HepG2 (cell line): ENCODE measurements at regions of chr16 and their contacts with region 1.

Region 1: DNA sequence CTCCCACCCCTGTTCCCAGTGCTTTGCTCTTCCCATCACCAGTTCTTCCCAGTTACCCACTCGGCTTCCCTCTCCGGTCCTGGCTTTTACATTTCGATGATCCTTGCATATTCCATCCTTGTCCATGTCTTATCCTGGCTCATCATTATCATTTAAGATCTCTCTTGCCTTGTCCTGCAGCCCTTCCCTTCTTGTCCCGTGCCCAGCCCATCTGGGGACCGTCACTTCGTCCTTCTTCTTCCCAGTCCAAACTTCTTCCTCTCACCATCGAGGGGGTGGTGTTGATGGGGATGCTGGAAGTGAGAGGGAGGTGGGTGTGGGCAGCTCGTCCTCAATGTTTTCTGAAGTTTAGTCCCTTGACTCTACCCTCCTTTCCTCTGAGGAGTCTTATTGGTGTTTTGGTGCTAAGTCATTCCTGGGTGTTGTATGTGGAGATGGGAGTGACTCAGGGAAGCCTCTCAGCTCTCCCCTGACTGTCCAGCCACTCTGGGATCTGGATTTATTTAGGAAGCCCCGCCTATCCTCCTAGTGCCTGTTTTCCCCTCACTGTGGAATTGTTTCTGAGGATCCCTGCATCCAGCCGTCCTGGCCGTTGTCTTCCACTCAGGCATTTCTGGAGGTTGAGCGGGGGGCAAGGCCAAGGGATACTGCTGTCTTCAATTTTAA is 975 bp downstream of the SNX29 start:
- DNase-seq: no peak
- ATAC-seq: peak; percentile 4
- H3K4me3 ChIP-seq: peak overlapping the region; percentile 75 to 91 (median 87)
- H3K27ac ChIP-seq: no peak overlapping the region
- H3K4me1 ChIP-seq: peaks cover 43% of the 10 kb centered on the region
- H3K27me3 ChIP-seq: no peaks in the 10 kb centered on the region; a peak in 1 of 5 replicates
- CTCF ChIP-seq: no peak
- EP300 ChIP-seq: no peak
- POLR2A ChIP-seq: no peak
- RAD21 ChIP-seq: no peak

Region 2: DNA sequence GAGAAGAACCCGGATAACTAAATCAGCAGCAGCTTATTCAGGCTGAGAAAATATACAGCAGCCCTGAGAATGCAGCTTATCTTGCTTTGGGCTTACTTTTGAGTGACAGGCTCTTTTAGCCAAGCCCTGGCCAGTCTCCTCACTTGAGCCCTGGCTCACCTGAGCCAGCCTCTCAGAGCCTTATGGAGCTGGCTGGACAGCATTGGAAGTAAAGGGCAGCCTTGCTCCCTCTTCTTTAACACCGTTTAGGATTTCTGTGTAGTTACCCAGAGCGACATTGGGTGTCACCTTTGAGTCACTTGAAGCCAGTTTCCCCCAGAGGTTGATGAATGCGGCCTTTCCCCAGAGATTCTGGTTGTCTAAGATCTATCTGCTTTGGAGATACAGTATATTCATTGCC is 28.0 kb before region 1 on chr16:
- CTCF ChIA-PET with region 1: no interaction called
- POLR2A ChIA-PET with region 1: interaction called, 10 read pairs
- in situ Hi-C with region 1: no loop called
- intact Hi-C with region 1: no loop called
- DNase-seq: peak; percentile 73
- ATAC-seq: peak; percentile 97
- H3K4me3 ChIP-seq: no peak overlapping the region
- H3K27ac ChIP-seq: no peak overlapping the region
- H3K4me1 ChIP-seq: peaks cover 25% of the 10 kb centered on the region; the same call in 1 of the 2 replicates
- H3K27me3 ChIP-seq: peaks cover 0 to 12% of the 10 kb centered on the region in 2 experiments; a peak in 2 of 5 replicates
- CTCF ChIP-seq: peak; percentile 93
- EP300 ChIP-seq: 0 out of 4 replicates have a peak, but pooled peaks of 1 of the 2 experiments have one; percentile 19
- POLR2A ChIP-seq: no peak
- RAD21 ChIP-seq: peak; percentile 77

Region 3: DNA sequence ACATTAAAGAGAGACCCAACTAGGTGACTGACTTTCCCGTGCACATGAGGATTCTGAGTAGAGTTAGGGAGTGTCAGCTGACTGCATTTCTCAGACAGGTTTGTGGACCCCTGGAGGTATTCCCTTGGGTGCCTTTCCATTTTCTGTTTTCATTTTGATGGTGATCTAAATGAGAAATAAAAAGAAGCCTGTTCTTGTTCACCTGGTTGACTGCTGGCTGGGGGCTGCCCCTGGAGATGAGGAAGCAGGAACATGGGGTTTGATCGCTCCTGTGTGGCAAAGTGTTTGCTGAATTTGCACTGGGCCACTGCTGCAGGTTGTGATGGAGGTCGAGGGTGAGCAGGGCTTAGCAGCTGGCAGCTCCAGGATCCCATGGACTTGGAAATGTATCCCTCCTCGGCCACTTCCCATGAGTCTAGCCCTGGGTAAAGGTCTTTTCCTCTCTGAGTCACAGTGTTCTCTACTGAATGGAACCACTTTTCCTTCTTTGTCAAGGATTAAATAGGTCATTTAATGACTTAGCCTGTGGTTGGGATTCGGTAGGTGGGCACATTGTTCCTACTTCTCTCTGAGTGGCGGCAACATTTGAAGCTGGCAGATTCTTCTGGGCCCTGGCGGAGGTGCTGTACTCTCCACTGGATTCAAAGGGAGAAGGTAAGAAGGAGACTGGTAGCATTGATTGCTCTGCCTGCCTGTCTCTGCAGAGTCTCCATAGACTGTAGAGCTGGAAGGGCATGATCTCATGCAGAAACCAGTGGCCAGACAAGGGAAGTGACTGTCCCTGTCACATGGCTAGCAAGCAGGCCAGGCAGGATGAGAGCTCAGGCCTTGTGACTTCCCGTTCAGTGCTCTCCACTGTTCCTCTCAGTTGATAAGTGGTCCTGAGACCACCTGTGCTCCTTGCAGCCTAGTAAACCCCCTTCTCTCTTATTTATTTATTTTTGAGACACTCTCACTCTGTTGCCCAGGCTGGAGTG is 16.9 kb after region 1 on chr16:
- CTCF ChIA-PET with region 1: no interaction called
- POLR2A ChIA-PET with region 1: interaction called, 38 read pairs
- in situ Hi-C with region 1: no loop called
- intact Hi-C with region 1: loop called (anchors 2 kb)
- DNase-seq: peak; percentile 35
- ATAC-seq: peak; percentile 64
- H3K4me3 ChIP-seq: no peak overlapping the region
- H3K27ac ChIP-seq: no peak overlapping the region
- H3K4me1 ChIP-seq: peaks cover 38% of the 10 kb centered on the region
- H3K27me3 ChIP-seq: no peaks in the 10 kb centered on the region
- CTCF ChIP-seq: no peak
- EP300 ChIP-seq: no peak
- POLR2A ChIP-seq: no peak
- RAD21 ChIP-seq: no peak

Region 4: GRCh38 chr16:12011565-12011964 is 34.1 kb after region 1 on chr16:
- CTCF ChIA-PET with region 1: no interaction called
- POLR2A ChIA-PET with region 1: no interaction called
- in situ Hi-C with region 1: no loop called
- intact Hi-C with region 1: no loop called
- DNase-seq: no peak
- ATAC-seq: no peak
- H3K4me3 ChIP-seq: no peak overlapping the region
- H3K27ac ChIP-seq: no peak overlapping the region
- H3K4me1 ChIP-seq: peaks cover 7% of the 10 kb centered on the region
- H3K27me3 ChIP-seq: no peaks in the 10 kb centered on the region
- CTCF ChIP-seq: no peak
- EP300 ChIP-seq: no peak
- POLR2A ChIP-seq: no peak
- RAD21 ChIP-seq: no peak

Region 5: GRCh38 chr16:12043953-12044352 is 66.4 kb after region 1 on chr16:
- CTCF ChIA-PET with region 1: no interaction called
- POLR2A ChIA-PET with region 1: interaction called, 10 read pairs
- in situ Hi-C with region 1: no loop called
- intact Hi-C with region 1: no loop called
- DNase-seq: no peak
- ATAC-seq: no peak
- H3K4me3 ChIP-seq: no peak overlapping the region
- H3K27ac ChIP-seq: no peak overlapping the region
- H3K4me1 ChIP-seq: peaks cover 11% of the 10 kb centered on the region
- H3K27me3 ChIP-seq: no peaks in the 10 kb centered on the region
- CTCF ChIP-seq: no peak
- EP300 ChIP-seq: no peak
- POLR2A ChIP-seq: no peak
- RAD21 ChIP-seq: no peak